Cardiac septum (tissue), 1 donor: ENCODE measurements at regions of chr3 and their contacts with region 1.

Region 1: GRCh38 chr3:79086514-79086913 is 681.3 kb downstream of the ROBO1 start:
- DNase-seq: no peak

Region 2: DNA sequence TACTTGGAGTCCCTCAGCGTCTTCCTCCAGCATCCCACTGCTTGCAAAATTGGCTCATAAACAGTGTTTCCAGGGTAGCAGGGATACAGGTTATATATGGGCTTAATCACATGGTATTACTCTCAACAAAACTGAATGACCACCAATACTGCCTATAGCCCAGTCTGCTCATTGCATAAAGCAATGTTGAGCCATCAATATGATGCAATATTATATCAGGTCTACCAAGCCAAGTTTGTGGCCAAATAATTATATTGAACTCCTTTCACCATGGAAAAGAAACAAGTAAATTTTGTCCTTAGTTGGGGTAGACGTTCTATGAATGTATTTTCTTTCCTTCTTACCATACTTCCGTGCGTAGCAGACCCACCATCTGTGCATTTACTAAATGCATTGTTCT is 28.9 kb after region 1 on chr3:
- intact Hi-C with region 1: no loop called
- DNase-seq: no peak

Region 3: DNA sequence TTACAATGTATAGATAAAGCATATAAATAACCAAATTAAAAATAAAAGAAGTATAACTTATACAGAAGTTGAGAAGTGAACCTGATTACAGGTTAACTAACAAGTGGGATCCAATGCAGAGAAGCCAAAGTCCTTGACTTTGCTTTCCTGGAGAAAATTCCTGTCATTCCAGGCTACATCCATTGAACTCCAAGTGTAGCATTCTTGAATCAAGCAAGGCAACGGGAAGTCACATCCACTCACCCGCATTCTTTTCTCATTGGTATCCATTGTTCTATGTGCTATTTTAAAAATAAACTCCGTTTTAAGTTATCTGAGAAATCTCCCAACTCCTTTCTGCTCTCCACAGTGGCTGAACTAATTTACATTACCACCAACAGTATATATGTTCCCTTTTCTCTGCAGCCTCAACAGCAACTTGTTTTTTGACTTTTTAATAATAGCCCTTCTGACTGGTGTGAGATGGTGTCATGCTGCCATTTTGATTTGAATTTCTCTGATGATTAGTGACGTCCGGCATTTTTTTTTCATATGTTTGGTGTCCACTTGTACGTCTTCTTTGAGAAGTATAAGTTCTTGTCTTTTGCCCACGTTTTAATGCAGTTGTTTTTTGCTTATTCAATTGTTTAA is 147.0 kb after region 1 on chr3:
- intact Hi-C with region 1: no loop called
- DNase-seq: no peak

Region 4: DNA sequence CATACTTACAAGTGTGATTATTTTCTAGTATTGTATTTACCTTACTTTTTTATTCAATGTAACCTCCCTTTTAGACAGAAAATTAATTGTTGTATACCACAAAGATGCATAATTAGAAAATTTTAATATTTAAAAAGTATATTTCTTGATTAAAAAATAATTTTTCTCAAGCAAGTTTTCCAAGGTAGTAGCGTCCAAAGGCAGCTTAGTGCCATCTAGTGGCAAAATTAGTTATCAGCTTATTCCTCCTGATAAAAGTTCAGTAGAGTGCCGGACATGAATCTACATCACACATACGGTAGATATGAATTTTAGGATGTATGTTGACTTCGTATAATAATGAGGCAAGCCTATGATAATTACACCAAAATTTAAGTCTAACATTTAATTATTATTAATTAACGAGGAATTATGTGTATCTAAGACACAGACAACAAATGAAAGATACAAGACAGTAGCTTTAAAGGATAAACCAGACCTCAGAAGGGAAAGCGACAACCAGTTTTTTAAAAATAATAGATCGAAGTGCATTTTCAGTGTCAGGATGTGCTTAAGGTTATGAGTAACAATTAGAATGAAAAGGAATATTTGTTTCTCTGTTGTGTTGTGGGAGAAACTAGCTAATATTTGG is 275.3 kb after region 1 on chr3:
- intact Hi-C with region 1: loop called (anchors 5 kb)
- DNase-seq: no peak